Heart right ventricle (tissue), 16 donors: ENCODE measurements at regions of chr19 and their contacts with region 1.

Region 1: DNA sequence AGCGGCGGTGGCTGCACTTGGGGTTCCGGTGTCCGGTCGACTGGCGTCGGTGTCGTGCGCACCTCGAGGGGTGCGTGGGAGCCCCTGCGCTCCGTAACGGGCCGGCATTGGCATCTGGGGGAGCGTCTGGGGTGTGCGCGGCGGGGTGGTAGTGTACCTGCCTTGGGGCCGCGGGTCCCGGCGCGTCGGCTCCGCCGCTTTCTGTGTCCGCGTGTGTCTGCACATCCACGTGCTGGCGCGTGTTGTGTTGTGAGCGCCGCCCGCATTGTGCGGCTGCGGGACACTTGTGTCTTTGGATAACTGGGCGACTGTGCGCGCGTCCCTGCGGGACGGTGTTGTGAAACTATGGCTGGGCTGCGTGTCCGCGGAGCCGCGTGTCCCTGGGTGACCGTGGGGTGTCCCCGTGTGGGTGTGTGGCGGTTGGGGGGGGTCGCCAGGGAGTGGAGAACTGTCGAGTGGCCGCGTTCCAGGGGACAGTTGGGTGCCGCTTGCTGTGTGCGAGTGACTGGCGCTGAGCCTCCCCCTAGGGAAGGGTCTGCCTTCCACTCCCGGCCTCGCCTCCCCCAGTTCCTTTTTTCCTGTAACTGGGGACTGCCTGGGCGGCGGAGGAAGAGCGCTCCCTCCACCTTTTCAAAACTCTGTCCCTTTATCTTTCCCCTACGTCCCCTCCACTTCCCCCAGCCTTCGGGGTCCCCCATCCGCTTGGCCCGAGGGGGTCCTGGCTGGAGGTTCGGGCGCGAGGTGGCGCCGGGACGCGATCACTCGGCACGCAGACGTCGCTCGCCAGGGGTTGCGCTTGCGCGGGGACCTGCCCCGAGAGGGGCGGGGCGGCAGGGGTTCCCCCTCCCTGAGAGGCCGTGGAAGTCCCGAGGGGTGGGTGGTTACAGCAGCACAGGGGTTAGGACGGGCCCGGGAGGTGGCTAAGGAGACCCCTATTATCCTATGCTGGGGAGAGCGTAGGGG is 5.7 kb upstream of the NFIC start:
- DNase-seq: peak; percentile 81 to 84
- ATAC-seq: peak; percentile 56 to 82 (median 72)
- H3K4me3 ChIP-seq: peak overlapping the region; percentile 40 to 100 (median 82)
- H3K27ac ChIP-seq: peak overlapping the region; percentile 88 to 100 (median 96)
- H3K4me1 ChIP-seq: peaks cover 17 to 60% (median 43%) of the 10 kb centered on the region in 9 donors
- H3K27me3 ChIP-seq: peaks cover 0 to 10% (median 0%) of the 10 kb centered on the region in 7 donors
- CTCF ChIP-seq: peak in 5 of 9 donors; percentile 22 to 55 (median 48)

Region 2: GRCh38 chr19:3466635-3467034 is 105.9 kb after region 1 on chr19:
- intact Hi-C with region 1: loop called in 1 of 10 experiments (anchors 1 kb)
- DNase-seq: peak in 1 of 2 donors; percentile 31
- ATAC-seq: peak in 7 of 8 donors; percentile 7 to 84 (median 46)
- H3K4me3 ChIP-seq: no peak overlapping the region
- H3K27ac ChIP-seq: peak overlapping the region in 6 of 10 donors; percentile 7 to 70 (median 49)
- H3K4me1 ChIP-seq: peaks cover 0 to 56% (median 17%) of the 10 kb centered on the region in 9 donors
- H3K27me3 ChIP-seq: no peaks in the 10 kb centered on the region
- CTCF ChIP-seq: no peak